H1 (cell line): ENCODE measurements at regions of chr4 and their contacts with region 1.

Region 1: GRCh38 chr4:168877511-168878491 is 132.3 kb downstream of the CBR4 start:
- DNase-seq: peak in 1 of 2 experiments; percentile 75
- H3K4me3 ChIP-seq: peak overlapping the region; percentile 38 to 63 (median 41)
- H3K27ac ChIP-seq: no peak overlapping the region
- H3K4me1 ChIP-seq: peaks cover 0 to 3% (median 0%) of the 10 kb centered on the region in 4 experiments; a peak in 2 of 7 replicates
- H3K27me3 ChIP-seq: peaks cover 0 to 14% (median 3%) of the 10 kb centered on the region in 4 experiments; a peak in 6 of 7 replicates
- CTCF ChIP-seq: no peak
- EP300 ChIP-seq: no peak
- POLR2A ChIP-seq: 0 out of 3 replicates have a peak, but pooled peaks of 1 of the 2 experiments have one; percentile 15
- RAD21 ChIP-seq: peak in 1 of 2 experiments; percentile 1; a peak in 2 of 4 replicates

Region 2: DNA sequence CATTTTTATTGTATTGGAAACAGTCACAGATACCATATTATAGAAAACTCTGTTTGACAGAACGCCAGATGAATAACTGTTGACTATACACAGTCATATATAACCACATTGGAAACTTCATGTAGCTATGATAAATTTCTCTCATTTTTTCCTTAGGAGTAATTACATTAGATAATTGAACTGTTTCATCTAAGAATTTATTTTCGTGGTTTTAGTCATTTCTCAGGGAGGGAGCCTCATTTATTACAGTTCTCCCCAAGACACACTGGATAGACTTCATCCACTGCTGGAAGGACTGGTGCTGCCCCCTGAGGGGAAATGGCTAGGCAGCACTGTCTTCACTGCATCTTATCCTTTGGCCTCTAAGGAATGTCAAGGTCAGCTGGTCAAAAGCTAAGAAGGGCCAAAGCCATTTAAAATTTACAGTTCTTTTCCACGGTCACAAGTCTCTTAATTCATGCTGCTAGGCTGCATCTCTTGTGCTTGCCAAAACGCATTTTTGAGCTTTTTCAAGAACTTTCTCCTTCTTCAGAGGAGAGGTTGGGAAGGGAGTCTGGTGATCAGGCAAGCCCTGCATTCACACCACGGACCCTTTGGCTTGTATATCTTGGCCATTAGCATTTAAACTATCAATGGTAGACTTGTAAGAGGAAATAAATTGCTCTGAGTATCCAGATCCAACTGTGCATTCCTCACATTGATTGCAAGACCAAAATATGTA is 12.8 kb before region 1 on chr4:
- CTCF ChIA-PET with region 1: interaction called, 18 read pairs
- POLR2A ChIA-PET with region 1: interaction called, 4 read pairs
- DNase-seq: no peak
- H3K4me3 ChIP-seq: no peak overlapping the region
- H3K27ac ChIP-seq: no peak overlapping the region
- H3K4me1 ChIP-seq: peaks cover 0 to 8% (median 4%) of the 10 kb centered on the region in 4 experiments; a peak in 2 of 7 replicates
- H3K27me3 ChIP-seq: no peaks in the 10 kb centered on the region
- CTCF ChIP-seq: peak; percentile 48 to 64 (median 63)
- EP300 ChIP-seq: no peak
- POLR2A ChIP-seq: no peak
- RAD21 ChIP-seq: peak; percentile 67 to 72